CD8-positive, alpha-beta T cell (primary cell): ENCODE measurements at regions of chr6 and their contacts with region 1.

Region 1: DNA sequence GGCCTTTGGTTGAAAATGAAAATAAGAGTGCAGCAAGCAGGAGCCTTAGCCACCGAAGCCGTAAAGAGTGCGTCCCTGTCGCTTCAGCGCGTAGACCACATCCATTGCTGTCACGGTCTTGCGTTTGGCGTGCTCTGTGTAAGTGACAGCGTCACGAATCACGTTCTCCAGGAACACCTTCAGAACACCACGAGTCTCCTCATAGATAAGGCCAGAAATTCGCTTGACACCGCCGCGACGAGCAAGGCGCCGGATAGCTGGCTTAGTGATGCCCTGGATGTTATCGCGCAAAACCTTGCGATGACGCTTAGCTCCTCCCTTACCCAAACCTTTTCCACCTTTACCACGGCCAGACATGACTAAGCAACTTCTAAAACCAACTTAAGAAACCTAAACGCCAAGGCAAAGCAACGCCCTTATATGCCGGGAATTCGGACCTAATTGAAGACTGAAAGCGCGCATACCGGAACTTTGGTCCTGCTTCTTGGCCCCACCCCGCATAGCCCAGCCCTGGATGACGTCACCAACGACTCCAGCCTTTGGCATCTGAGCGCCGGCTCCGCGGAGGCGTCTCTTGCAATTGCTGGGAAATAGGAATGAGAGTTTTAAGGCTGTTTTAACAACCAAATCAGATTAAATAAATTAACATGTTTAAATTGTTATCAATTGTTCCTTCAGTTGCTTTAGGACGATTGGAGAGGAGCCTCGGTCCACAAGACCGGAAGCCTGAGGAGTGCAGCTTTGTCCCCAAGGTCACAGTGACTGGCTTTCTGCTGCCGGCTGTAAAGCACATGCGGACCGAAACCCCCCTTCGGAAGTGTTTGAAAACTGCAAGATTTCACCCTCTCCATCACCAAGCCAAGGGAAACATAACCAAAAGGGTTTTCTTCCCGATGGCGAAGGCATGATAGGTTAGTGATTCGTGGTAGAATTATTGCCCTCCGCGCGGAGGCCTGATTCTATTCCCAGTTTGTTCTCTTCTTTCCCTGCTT is 79.6 kb upstream of the BTN3A2 start:
- DNase-seq: peak; percentile 83 to 99 (median 96)
- ATAC-seq: peak; percentile 82
- H3K4me3 ChIP-seq: peak overlapping the region; percentile 73 to 76
- H3K4me3 Mint-ChIP-seq: peak overlapping the region; percentile 91
- H3K27ac ChIP-seq: peak overlapping the region; percentile 89 to 96
- H3K27ac Mint-ChIP-seq: peak overlapping the region; percentile 97
- H3K4me1 ChIP-seq: peaks cover 14% of the 10 kb centered on the region
- H3K4me1 Mint-ChIP-seq: peaks cover 31% of the 10 kb centered on the region
- H3K27me3 ChIP-seq: no peaks in the 10 kb centered on the region
- H3K27me3 Mint-ChIP-seq: no peaks in the 10 kb centered on the region
- CTCF ChIP-seq: no peak

Region 2: GRCh38 chr6:26175428-26176181 is 109.8 kb before region 1 on chr6:
- CTCF ChIA-PET with region 1: no interaction called
- POLR2A ChIA-PET with region 1: interaction called, 30 read pairs
- intact Hi-C with region 1: loop called in 1 of 2 experiments (anchors 1 kb)
- DNase-seq: peak in 7 of 9 experiments; percentile 33 to 87 (median 53)
- ATAC-seq: no peak
- H3K4me3 ChIP-seq: no peak overlapping the region
- H3K4me3 Mint-ChIP-seq: peak overlapping the region; percentile 3
- H3K27ac ChIP-seq: no peak overlapping the region
- H3K27ac Mint-ChIP-seq: peak overlapping the region; percentile 63
- H3K4me1 ChIP-seq: peaks cover 26% of the 10 kb centered on the region
- H3K4me1 Mint-ChIP-seq: peaks cover 39% of the 10 kb centered on the region
- H3K27me3 ChIP-seq: no peaks in the 10 kb centered on the region
- H3K27me3 Mint-ChIP-seq: no peaks in the 10 kb centered on the region
- CTCF ChIP-seq: peak; percentile 93

Region 3: GRCh38 chr6:26223650-26224546 is 61.5 kb before region 1 on chr6:
- CTCF ChIA-PET with region 1: no interaction called
- POLR2A ChIA-PET with region 1: interaction called, 19 read pairs
- intact Hi-C with region 1: no loop called
- DNase-seq: peak in 8 of 9 experiments; percentile 42 to 90 (median 72)
- ATAC-seq: peak; percentile 85
- H3K4me3 ChIP-seq: peak overlapping the region; percentile 64 to 72
- H3K4me3 Mint-ChIP-seq: no peak overlapping the region
- H3K27ac ChIP-seq: peak overlapping the region; percentile 76 to 87
- H3K27ac Mint-ChIP-seq: no peak overlapping the region
- H3K4me1 ChIP-seq: peaks cover 20% of the 10 kb centered on the region
- H3K4me1 Mint-ChIP-seq: peaks cover 24% of the 10 kb centered on the region
- H3K27me3 ChIP-seq: no peaks in the 10 kb centered on the region
- H3K27me3 Mint-ChIP-seq: no peaks in the 10 kb centered on the region
- CTCF ChIP-seq: no peak

Region 4: GRCh38 chr6:26249957-26250697 is 35.3 kb before region 1 on chr6:
- CTCF ChIA-PET with region 1: interaction called, 5 read pairs
- POLR2A ChIA-PET with region 1: interaction called, 51 read pairs
- intact Hi-C with region 1: loop called (anchors 1 kb)
- DNase-seq: peak; percentile 59 to 91 (median 79)
- ATAC-seq: peak; percentile 77
- H3K4me3 ChIP-seq: peak overlapping the region; percentile 74 to 80
- H3K4me3 Mint-ChIP-seq: peak overlapping the region; percentile 90
- H3K27ac ChIP-seq: peak overlapping the region; percentile 73 to 83
- H3K27ac Mint-ChIP-seq: peak overlapping the region; percentile 96
- H3K4me1 ChIP-seq: peaks cover 15% of the 10 kb centered on the region
- H3K4me1 Mint-ChIP-seq: peaks cover 40% of the 10 kb centered on the region
- H3K27me3 ChIP-seq: no peaks in the 10 kb centered on the region
- H3K27me3 Mint-ChIP-seq: no peaks in the 10 kb centered on the region
- CTCF ChIP-seq: peak; percentile 57

Region 5: DNA sequence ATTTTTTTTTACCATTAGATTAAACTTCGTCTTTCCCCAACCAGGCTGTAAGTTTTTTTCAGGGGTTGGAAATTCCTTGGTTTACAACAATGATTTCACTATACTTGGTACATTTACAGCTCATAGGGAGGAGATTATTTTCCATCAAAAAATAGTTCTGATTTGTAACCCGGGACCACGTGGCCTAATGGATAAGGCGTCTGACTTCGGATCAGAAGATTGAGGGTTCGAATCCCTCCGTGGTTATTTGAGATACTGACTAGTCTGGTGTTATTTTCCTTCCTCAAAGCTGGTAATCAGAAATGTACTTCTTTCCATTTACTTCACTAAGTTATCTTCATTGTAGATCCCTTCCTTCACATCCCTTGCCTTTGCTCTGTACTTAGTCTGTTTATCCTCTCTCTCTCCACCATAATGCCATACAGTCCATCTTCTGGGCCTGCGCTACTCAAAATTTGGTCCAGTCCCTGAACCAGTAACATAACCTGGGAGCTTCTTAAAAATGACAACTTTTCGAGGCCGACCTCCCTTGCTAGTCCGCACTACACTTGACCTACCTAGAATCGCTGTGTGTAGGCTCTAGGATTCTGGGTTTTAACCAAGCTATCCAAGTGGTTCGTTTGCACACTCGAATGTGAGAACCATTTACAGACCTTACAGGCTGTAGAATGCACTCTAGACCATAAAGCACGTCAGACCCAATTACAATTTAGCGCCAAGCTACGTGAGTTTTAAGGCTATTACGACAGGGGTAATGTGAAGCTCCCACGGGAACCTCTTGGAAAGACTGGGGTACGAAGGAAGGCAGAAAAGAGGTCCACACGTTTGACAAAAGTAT is 37.4 kb after region 1 on chr6:
- CTCF ChIA-PET with region 1: interaction called, 3 read pairs
- POLR2A ChIA-PET with region 1: interaction called, 13 read pairs
- intact Hi-C with region 1: no loop called
- DNase-seq: peak in 8 of 9 experiments; percentile 32 to 86 (median 58)
- ATAC-seq: peak; percentile 65
- H3K4me3 ChIP-seq: peak overlapping the region; percentile 55 to 64
- H3K4me3 Mint-ChIP-seq: peak overlapping the region; percentile 88
- H3K27ac ChIP-seq: no peak overlapping the region
- H3K27ac Mint-ChIP-seq: peak overlapping the region; percentile 90
- H3K4me1 ChIP-seq: peaks cover 5% of the 10 kb centered on the region
- H3K4me1 Mint-ChIP-seq: peaks cover 24% of the 10 kb centered on the region
- H3K27me3 ChIP-seq: peaks cover 0 to 2% of the 10 kb centered on the region in 2 experiments
- H3K27me3 Mint-ChIP-seq: peaks cover 15% of the 10 kb centered on the region
- CTCF ChIP-seq: no peak

Region 6: GRCh38 chr6:27825025-27825793 is 1539.8 kb after region 1 on chr6:
- CTCF ChIA-PET with region 1: no interaction called
- POLR2A ChIA-PET with region 1: no interaction called
- intact Hi-C with region 1: loop called in 1 of 2 experiments (anchors 5 kb)
- DNase-seq: peak in 1 of 9 experiments; percentile 45
- ATAC-seq: peak; percentile 6
- H3K4me3 ChIP-seq: peak overlapping the region; percentile 55 to 76
- H3K4me3 Mint-ChIP-seq: peak overlapping the region; percentile 89
- H3K27ac ChIP-seq: peak overlapping the region; percentile 81 to 91
- H3K27ac Mint-ChIP-seq: peak overlapping the region; percentile 99
- H3K4me1 ChIP-seq: peaks cover 24% of the 10 kb centered on the region
- H3K4me1 Mint-ChIP-seq: peaks cover 32% of the 10 kb centered on the region
- H3K27me3 ChIP-seq: no peaks in the 10 kb centered on the region
- H3K27me3 Mint-ChIP-seq: no peaks in the 10 kb centered on the region
- CTCF ChIP-seq: no peak

Region 7: GRCh38 chr6:28206928-28207509 is 1921.6 kb after region 1 on chr6:
- CTCF ChIA-PET with region 1: no interaction called
- POLR2A ChIA-PET with region 1: no interaction called
- intact Hi-C with region 1: no loop called
- DNase-seq: no peak
- ATAC-seq: no peak
- H3K4me3 ChIP-seq: no peak overlapping the region
- H3K4me3 Mint-ChIP-seq: peak overlapping the region; percentile 63
- H3K27ac ChIP-seq: no peak overlapping the region
- H3K27ac Mint-ChIP-seq: no peak overlapping the region
- H3K4me1 ChIP-seq: peaks cover 7% of the 10 kb centered on the region
- H3K4me1 Mint-ChIP-seq: peaks cover 23% of the 10 kb centered on the region
- H3K27me3 ChIP-seq: peaks cover 33 to 49% of the 10 kb centered on the region in 2 experiments
- H3K27me3 Mint-ChIP-seq: peaks cover 73% of the 10 kb centered on the region
- CTCF ChIP-seq: no peak